ENCODE measurements at regions of chr11 and their contacts with region 1.

Region 1: GRCh38 chr11:122101625-122102291 is 14.3 kb downstream of the BLID start:
- DNase-seq: peak; percentile 89
- H3K4me3 ChIP-seq: peak overlapping the region in 2 of 3 experiments; percentile 69 to 70
- H3K27ac ChIP-seq: peak overlapping the region; percentile 71
- H3K4me1 ChIP-seq: peaks cover 74% of the 10 kb centered on the region
- H3K27me3 ChIP-seq: no peaks in the 10 kb centered on the region
- CTCF ChIP-seq: peak; percentile 45 to 64
- POLR2A ChIP-seq: no peak

Region 2: GRCh38 chr11:121655537-121656327 is 446.0 kb before region 1 on chr11:
- CTCF ChIA-PET with region 1: interaction called, 52 read pairs
- POLR2A ChIA-PET with region 1: no interaction called
- dilution Hi-C with region 1: no loop called
- intact Hi-C with region 1: loop called (anchors 1 kb)
- DNase-seq: peak; percentile 87
- H3K4me3 ChIP-seq: peak overlapping the region; percentile 6 to 68 (median 39)
- H3K27ac ChIP-seq: peak overlapping the region; percentile 69
- H3K4me1 ChIP-seq: peaks cover 2% of the 10 kb centered on the region
- H3K27me3 ChIP-seq: peaks cover 5 to 11% of the 10 kb centered on the region in 2 experiments
- CTCF ChIP-seq: peak; percentile 84 to 98
- POLR2A ChIP-seq: no peak

Region 3: DNA sequence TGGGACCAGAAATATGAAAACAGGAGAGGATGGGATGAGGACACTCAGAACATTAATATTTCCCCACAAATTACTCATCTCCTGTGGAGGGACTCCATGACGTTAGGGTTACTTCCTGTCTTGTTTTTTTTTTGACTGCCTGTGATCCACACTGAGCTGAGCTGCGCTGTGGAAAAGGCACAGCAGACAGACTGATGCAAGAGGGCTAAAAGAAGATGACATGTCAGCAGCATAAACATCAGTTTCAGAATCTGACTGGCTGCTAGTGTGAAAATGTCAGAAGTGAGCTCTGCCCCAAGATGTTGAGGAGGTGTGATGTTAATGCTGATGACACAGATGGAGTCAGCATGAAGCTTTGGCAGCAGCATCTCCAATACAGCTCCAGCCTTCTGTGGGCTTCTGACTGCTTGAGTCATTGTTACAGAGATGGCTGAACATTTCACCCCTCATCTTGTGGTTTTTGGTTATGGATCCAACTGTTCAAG is 272.6 kb before region 1 on chr11:
- CTCF ChIA-PET with region 1: no interaction called
- POLR2A ChIA-PET with region 1: no interaction called
- dilution Hi-C with region 1: no loop called
- intact Hi-C with region 1: loop called (anchors 2 kb)
- DNase-seq: peak; percentile 87
- H3K4me3 ChIP-seq: no peak overlapping the region
- H3K27ac ChIP-seq: peak overlapping the region; percentile 81
- H3K4me1 ChIP-seq: peaks cover 26% of the 10 kb centered on the region
- H3K27me3 ChIP-seq: no peaks in the 10 kb centered on the region
- CTCF ChIP-seq: no peak
- POLR2A ChIP-seq: peak; percentile 49

Region 4: DNA sequence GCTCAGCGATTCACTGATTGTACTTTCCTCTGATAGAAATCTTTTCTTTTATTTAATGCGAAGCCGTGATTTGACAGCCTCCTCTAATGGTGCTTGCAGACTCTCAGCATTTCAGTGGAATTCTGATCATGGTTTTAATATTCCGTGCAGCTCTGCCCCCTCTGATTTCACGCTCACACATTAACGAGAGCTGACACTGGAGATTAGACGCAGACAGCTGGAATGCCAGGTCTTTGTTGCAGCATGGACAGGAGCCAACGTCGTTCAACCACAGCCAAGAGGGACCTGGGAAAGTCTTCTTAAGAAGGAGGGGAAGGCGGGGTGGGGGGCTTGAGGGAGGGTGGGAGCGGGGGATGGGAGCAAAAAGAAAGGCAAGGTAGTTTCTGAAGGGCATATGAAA is 172.2 kb before region 1 on chr11:
- CTCF ChIA-PET with region 1: no interaction called
- POLR2A ChIA-PET with region 1: no interaction called
- dilution Hi-C with region 1: no loop called
- intact Hi-C with region 1: loop called (anchors 5 kb)
- DNase-seq: peak; percentile 63
- H3K4me3 ChIP-seq: peak overlapping the region in 2 of 3 experiments; percentile 16 to 39
- H3K27ac ChIP-seq: no peak overlapping the region
- H3K4me1 ChIP-seq: peaks cover 8% of the 10 kb centered on the region
- H3K27me3 ChIP-seq: peaks cover 0 to 2% of the 10 kb centered on the region in 2 experiments
- CTCF ChIP-seq: no peak
- POLR2A ChIP-seq: no peak

Region 5: DNA sequence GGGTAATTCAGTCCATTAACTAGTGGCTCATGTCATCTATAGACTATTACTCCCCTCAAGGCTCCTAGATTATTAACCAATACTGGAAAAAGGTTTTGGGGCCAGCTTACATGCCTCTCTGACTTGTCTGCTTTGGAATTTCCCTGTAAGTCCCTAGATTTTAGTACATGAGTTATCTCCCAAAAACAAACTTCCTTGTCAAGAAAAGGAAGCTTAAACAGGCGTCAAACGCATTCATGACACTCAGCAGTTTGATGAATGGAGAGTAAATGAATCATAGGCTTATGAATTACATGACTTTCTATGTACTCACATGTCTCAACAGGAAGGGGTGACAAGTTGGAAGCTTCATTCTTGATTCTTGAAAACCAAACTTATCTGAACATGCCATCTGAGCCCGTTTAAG is 56.6 kb before region 1 on chr11:
- CTCF ChIA-PET with region 1: no interaction called
- POLR2A ChIA-PET with region 1: no interaction called
- dilution Hi-C with region 1: no loop called
- intact Hi-C with region 1: loop called (anchors 1 kb)
- DNase-seq: peak; percentile 92
- H3K4me3 ChIP-seq: no peak overlapping the region
- H3K27ac ChIP-seq: peak overlapping the region; percentile 82
- H3K4me1 ChIP-seq: peaks cover 32% of the 10 kb centered on the region
- H3K27me3 ChIP-seq: no peaks in the 10 kb centered on the region
- CTCF ChIP-seq: no peak
- POLR2A ChIP-seq: no peak

Region 6: GRCh38 chr11:122137081-122137793 is 35.5 kb after region 1 on chr11:
- CTCF ChIA-PET with region 1: interaction called, 5 read pairs
- POLR2A ChIA-PET with region 1: no interaction called
- dilution Hi-C with region 1: no loop called
- intact Hi-C with region 1: loop called (anchors 2 kb)
- DNase-seq: peak; percentile 88
- H3K4me3 ChIP-seq: peak overlapping the region in 1 of 3 experiments; percentile 8
- H3K27ac ChIP-seq: peak overlapping the region; percentile 79
- H3K4me1 ChIP-seq: peaks cover 65% of the 10 kb centered on the region
- H3K27me3 ChIP-seq: no peaks in the 10 kb centered on the region
- CTCF ChIP-seq: no peak
- POLR2A ChIP-seq: peak; percentile 30

Region 7: DNA sequence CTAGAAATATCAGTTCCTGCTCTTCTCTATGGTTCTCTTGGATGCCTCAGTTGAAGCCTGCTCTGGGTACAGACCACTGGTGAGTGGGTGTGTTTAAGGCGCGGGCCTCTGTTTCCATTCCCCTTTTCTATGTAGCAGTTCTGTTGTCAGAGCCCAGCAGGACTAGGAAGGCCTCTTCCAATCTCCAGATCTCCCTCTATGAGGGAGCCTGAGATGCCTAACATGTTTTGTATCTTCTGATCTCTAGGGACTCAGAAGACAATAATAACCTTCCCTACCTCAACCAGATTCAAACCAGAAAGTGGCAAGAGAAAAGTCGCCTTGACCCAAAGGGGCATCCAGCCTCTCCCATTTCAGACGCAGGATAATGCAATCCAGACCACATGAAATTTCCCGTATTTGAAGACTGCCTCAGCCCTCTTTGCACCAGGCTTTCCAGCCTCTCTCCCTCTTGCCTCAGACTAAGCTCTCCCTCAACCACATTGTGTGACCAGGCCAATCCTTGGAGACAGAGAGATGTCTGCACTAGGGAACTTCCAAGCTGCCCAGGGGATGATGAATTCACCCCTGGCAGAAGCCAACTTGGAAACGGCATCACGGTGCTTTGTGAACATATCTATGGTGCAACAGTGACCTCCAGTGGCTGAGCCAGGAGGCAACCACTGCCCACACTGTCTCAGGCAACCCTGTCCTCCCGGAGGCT is 403.7 kb after region 1 on chr11:
- CTCF ChIA-PET with region 1: interaction called, 10 read pairs
- POLR2A ChIA-PET with region 1: no interaction called
- dilution Hi-C with region 1: no loop called
- intact Hi-C with region 1: loop called (anchors 2 kb)
- DNase-seq: peak; percentile 77
- H3K4me3 ChIP-seq: no peak overlapping the region
- H3K27ac ChIP-seq: no peak overlapping the region
- H3K4me1 ChIP-seq: no peaks in the 10 kb centered on the region
- H3K27me3 ChIP-seq: peaks cover 2 to 6% of the 10 kb centered on the region in 2 experiments
- CTCF ChIP-seq: peak; percentile 83 to 84
- POLR2A ChIP-seq: no peak